Activated T-helper 1 cell treated with anti-CD3 and anti-CD28 coated beads, Interleukin-12 subunit alpha, Interleukin-12 subunit beta, Interleukin-2, Interleukin-4 antibody, amounts not matched to agents 30 ng/mL and 10 ng/mL and 1 ng/mL, durations not matched to agents 14 hours and 24 hours and 36 hours (primary cell): ENCODE measurements at regions of chr9 and their contacts with region 1.

Region 1: GRCh38 chr9:121322037-121322775 is 47.8 kb downstream of the STOM start:
- DNase-seq: no peak
- H3K4me3 Mint-ChIP-seq: no peak overlapping the region
- H3K27ac Mint-ChIP-seq: no peak overlapping the region
- H3K4me1 Mint-ChIP-seq: peaks cover 26% of the 10 kb centered on the region
- H3K27me3 Mint-ChIP-seq: no peaks in the 10 kb centered on the region

Region 2: GRCh38 chr9:121213136-121213806 is 108.9 kb before region 1 on chr9:
- intact Hi-C with region 1: loop called (anchors 1 kb)
- DNase-seq: peak; percentile 49
- H3K4me3 Mint-ChIP-seq: no peak overlapping the region
- H3K27ac Mint-ChIP-seq: no peak overlapping the region
- H3K4me1 Mint-ChIP-seq: peaks cover 22% of the 10 kb centered on the region
- H3K27me3 Mint-ChIP-seq: peaks cover 3% of the 10 kb centered on the region

Region 3: DNA sequence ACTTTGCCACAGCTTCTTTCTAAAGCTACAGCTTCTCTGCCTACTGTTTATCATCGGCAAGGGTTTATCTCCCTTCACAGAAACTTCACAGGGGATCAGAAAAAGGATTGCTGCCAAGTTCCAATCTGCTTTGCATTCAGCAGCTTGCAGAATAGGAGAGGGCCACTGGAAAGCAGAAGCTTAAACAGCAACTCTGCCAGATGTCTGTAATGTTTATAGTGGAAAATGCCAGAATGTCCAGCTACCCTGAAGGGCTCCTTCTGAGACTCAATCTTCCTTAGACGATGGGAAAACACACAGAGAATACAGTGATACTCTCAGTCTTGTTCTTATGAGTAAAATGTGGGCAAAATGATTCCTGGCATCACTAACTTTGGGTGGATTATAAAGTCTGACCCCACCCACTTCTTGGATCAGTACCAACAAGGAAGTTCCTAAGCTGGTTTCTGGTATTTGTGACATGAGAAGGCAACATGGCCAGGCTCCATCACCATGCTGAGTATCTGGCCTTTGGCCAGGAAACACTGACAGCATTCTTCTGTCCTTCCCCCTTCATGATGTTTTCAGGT is 28.9 kb after region 1 on chr9:
- intact Hi-C with region 1: loop called (anchors 1 kb)
- DNase-seq: no peak
- H3K4me3 Mint-ChIP-seq: no peak overlapping the region
- H3K27ac Mint-ChIP-seq: no peak overlapping the region
- H3K4me1 Mint-ChIP-seq: peaks cover 46% of the 10 kb centered on the region
- H3K27me3 Mint-ChIP-seq: no peaks in the 10 kb centered on the region

Region 4: GRCh38 chr9:121376214-121376830 is 54.1 kb after region 1 on chr9:
- intact Hi-C with region 1: loop called (anchors 1 kb)
- DNase-seq: no peak
- H3K4me3 Mint-ChIP-seq: no peak overlapping the region
- H3K27ac Mint-ChIP-seq: no peak overlapping the region
- H3K4me1 Mint-ChIP-seq: peaks cover 21% of the 10 kb centered on the region
- H3K27me3 Mint-ChIP-seq: peaks cover 7% of the 10 kb centered on the region

Region 5: GRCh38 chr9:121498150-121498486 is 175.9 kb after region 1 on chr9:
- intact Hi-C with region 1: loop called (anchors 1 kb)
- DNase-seq: peak; percentile 31
- H3K4me3 Mint-ChIP-seq: peak overlapping the region; percentile 75
- H3K27ac Mint-ChIP-seq: no peak overlapping the region
- H3K4me1 Mint-ChIP-seq: peaks cover 18% of the 10 kb centered on the region
- H3K27me3 Mint-ChIP-seq: peaks cover 61% of the 10 kb centered on the region